ENCODE measurements at regions of chr7 and their contacts with region 1.

Region 1: GRCh38 chr7:23273141-23273599 is 26.0 kb upstream of the MALSU1 start:
- DNase-seq: peak; percentile 93

Region 2: GRCh38 chr7:23181684-23182553 is 91.3 kb before region 1 on chr7 and contains the start of gene NUP42:
- intact Hi-C with region 1: loop called in 1 of 2 experiments (anchors 10 kb)
- DNase-seq: peak; percentile 99
- total RNA-seq, gene NUP42: 20.7 to 20.8 TPM

Region 3: DNA sequence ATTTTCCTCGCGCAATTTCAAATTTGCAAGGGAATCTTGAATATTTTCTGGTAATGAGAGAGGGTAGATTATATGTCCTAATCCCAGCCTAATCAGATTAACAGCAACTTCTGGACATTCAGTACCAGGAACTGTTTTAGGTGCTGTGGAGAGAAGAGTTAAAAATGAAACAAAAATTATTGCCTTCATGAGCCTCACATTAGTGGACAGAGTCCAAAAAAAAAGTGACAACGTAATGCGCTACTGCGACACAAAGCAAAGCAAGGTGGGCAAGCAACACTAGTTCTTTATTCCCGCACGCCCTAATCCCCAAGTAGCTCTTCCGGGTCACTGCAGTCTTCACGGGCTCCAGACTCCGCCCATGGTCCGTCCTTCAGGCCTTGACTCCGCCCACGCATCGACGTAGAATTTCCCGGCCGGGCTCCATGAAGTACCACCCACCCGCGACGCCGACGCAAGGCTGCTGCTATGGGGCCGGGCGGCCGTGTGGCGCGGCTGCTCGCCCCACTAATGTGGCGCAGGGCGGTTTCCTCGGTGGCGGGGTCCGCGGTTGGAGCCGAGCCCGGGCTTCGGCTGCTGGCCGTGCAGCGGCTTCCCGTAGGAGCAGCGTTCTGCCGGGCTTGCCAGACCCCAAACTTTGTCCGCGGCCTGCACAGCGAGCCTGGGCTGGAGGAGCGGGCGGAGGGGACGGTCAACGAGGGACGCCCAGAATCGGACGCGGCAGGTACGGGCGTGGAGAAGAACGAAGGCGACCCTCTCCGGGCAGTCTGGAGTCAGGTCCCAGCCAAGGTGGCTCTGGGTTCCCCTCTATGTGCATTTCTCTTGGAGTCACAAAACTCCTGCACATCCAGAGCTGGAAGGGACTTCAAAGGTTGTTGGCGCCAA is 26.0 kb after region 1 on chr7 and contains the start of gene MALSU1:
- intact Hi-C with region 1: no loop called
- DNase-seq: peak; percentile 99
- total RNA-seq, gene MALSU1: 37.4 to 42.0 TPM

Region 4: GRCh38 chr7:23357190-23358093 is 84.3 kb after region 1 on chr7:
- intact Hi-C with region 1: no loop called
- DNase-seq: no peak

Measured in posterior vena cava (tissue), 2 donors.